ENCODE measurements at regions of chr2 and their contacts with region 1.

Region 1: DNA sequence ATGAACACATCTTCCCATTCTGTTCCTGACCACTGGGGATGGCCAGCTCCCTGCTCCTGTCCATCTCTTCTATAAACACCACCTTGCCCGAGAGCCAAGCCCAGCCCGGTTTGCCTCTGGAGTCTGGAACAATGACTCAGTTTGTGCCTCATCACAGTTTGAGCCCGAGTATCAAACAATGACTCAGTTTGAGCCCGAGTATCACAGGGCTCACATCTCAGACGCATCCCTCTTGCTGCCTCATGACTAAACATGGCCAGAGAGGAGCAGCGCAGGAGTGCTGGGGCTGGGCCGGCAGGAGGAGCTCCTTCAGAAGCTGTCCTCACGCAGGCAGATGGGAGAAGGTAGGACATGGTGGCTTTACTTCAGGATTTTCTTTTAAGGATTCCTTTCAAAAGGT is 68.7 kb downstream of the PXDN start:
- DNase-seq: no peak
- H3K4me3 Mint-ChIP-seq: no peak overlapping the region
- H3K27ac Mint-ChIP-seq: no peak overlapping the region
- H3K4me1 Mint-ChIP-seq: no peaks in the 10 kb centered on the region
- H3K27me3 Mint-ChIP-seq: no peaks in the 10 kb centered on the region
- CTCF ChIP-seq: no peak

Region 2: GRCh38 chr2:1866402-1867111 is 190.9 kb after region 1 on chr2:
- CTCF ChIA-PET with region 1: interaction called, 10 read pairs
- intact Hi-C with region 1: no loop called
- DNase-seq: no peak
- H3K4me3 Mint-ChIP-seq: no peak overlapping the region
- H3K27ac Mint-ChIP-seq: no peak overlapping the region
- H3K4me1 Mint-ChIP-seq: no peaks in the 10 kb centered on the region
- H3K27me3 Mint-ChIP-seq: no peaks in the 10 kb centered on the region
- CTCF ChIP-seq: no peak

Measured in Calu3 (cell line).